HEK293T (cell line): ENCODE measurements at regions of chr7 and their contacts with region 1.

Region 1: GRCh38 chr7:4681886-4682620 is at the start of gene FOXK1:
- DNase-seq: peak; percentile 90

Region 2: DNA sequence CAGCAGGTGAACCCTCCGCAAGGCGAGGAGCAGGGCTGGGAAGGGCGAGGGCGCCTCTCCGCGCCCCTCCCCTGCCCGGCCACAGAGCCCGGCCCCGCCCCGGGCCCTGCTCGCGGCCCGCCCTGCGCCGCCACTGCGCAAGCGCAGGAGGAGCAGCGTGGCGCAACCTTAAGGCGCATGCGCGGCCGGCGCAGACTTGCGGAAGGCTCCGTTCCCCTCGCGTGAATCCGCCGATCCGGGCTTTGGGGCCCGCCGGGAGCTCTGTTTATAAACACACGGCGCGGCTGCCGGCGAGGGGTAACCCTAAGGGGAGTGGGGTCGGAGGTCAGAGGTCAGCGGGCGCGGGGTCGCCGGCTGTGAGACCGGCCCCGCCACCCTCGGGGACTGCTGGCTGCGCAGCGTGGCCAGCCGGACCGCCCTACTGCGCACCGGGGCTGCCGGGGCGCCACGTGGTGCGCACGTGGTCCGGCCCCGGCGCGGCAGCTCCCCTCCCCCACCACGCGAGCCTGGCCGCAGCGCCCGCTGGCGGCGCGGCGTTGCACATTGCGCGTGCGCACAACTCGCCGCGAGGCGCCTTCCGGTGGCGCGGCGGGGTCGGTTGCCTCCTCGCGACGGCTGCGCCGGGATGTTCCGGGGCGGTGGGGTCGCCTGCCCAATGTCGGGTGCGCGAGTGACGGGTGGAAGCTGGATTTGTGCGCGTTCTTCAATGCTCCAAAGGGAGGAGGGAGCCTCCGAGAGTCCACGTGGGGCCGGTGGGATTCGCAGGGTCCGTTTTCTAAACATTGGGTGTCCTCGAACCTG is 40.2 kb before region 1 on chr7:
- CTCF ChIA-PET with region 1: interaction called, 3 read pairs
- POLR2A ChIA-PET with region 1: interaction called, 19 read pairs
- DNase-seq: peak; percentile 97